Activated naive CD4-positive, alpha-beta T cell treated with anti-CD3 and anti-CD28 coated beads for 36 hours (primary cell): ENCODE measurements at regions of chr15 and their contacts with region 1.

Region 1: GRCh38 chr15:65275728-65276126 is 11.0 kb downstream of the PARP16 start:
- DNase-seq: no peak
- H3K4me3 Mint-ChIP-seq: no peak overlapping the region
- H3K27ac Mint-ChIP-seq: peak overlapping the region; percentile 38
- H3K4me1 Mint-ChIP-seq: peaks cover 34% of the 10 kb centered on the region
- H3K27me3 Mint-ChIP-seq: no peaks in the 10 kb centered on the region

Region 2: DNA sequence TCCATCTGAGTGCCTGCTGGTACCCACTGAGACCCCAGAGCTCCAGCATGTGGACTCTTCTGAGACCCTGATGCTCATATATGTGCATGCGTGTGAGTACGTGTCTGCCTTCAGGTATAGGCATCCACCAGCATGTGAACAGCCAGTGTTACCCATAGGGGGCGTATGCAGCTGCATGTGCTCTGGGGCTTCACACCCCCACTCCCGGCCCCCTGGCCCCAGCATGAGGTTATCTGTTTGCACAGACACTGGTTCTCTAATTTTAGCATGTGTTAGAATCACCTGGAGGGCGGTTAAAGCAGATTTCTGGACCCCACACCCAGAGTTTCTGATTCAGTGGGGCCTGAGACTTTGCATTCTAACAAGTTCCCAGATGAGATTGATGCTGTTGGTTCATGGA is 63.6 kb before region 1 on chr15:
- CTCF ChIA-PET with region 1: interaction called, 13 read pairs
- intact Hi-C with region 1: loop called (anchors 1 kb)
- DNase-seq: peak; percentile 69
- H3K4me3 Mint-ChIP-seq: no peak overlapping the region
- H3K27ac Mint-ChIP-seq: no peak overlapping the region
- H3K4me1 Mint-ChIP-seq: peaks cover 3% of the 10 kb centered on the region
- H3K27me3 Mint-ChIP-seq: no peaks in the 10 kb centered on the region

Region 3: GRCh38 chr15:65249641-65250040 is 26.1 kb before region 1 on chr15:
- CTCF ChIA-PET with region 1: interaction called, 9 read pairs
- intact Hi-C with region 1: loop called (anchors 2 kb)
- DNase-seq: peak; percentile 96
- H3K4me3 Mint-ChIP-seq: peak overlapping the region; percentile 4
- H3K27ac Mint-ChIP-seq: peak overlapping the region; percentile 78
- H3K4me1 Mint-ChIP-seq: peaks cover 24% of the 10 kb centered on the region
- H3K27me3 Mint-ChIP-seq: no peaks in the 10 kb centered on the region

Region 4: DNA sequence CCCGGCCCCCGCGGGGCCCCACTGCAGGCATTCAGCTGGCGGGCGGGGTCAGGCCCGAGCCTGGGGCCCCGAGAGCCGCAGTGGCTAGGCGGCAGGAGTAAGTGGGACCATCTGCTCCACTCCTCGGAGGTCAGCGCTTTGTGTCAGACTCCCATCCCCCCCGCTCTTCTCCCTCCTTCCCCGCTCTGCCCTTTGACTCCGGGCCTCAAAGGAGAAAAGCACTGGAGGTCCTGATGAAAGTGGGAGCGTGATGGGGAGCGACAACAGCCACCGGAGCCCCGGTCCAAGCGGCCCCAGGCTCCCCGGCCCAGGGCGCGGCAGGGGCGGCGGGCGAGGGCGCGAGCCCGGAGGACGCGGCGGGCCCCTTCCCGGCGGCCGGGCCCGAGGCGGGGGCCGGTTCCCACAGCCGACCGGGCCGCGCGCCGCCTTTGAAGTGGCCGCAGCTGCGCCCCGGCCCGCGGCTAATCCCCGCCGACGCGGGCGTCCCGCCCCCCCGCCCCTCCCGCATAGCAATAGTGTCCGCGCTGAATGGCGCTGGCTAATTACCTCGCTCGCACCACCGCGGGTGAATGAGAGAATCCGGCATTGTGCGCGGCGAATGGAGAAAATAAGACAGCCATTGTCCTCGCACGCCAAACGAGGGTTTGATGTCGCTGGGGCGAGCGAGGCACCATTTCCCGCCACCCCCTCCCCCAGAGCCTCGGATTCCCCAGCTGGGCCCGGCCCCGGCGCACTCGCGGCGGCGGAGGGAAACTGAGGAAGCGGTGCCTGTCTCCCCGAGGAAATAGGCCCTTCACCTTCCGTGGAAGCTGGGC is 79.7 kb after region 1 on chr15:
- CTCF ChIA-PET with region 1: no interaction called
- intact Hi-C with region 1: no loop called
- DNase-seq: peak; percentile 10
- H3K4me3 Mint-ChIP-seq: peak overlapping the region; percentile 49
- H3K27ac Mint-ChIP-seq: no peak overlapping the region
- H3K4me1 Mint-ChIP-seq: peaks cover 5% of the 10 kb centered on the region
- H3K27me3 Mint-ChIP-seq: peaks cover 44% of the 10 kb centered on the region